Spleen (tissue), 13 donors: ENCODE measurements at regions of chr1 and their contacts with region 1.

Region 1: DNA sequence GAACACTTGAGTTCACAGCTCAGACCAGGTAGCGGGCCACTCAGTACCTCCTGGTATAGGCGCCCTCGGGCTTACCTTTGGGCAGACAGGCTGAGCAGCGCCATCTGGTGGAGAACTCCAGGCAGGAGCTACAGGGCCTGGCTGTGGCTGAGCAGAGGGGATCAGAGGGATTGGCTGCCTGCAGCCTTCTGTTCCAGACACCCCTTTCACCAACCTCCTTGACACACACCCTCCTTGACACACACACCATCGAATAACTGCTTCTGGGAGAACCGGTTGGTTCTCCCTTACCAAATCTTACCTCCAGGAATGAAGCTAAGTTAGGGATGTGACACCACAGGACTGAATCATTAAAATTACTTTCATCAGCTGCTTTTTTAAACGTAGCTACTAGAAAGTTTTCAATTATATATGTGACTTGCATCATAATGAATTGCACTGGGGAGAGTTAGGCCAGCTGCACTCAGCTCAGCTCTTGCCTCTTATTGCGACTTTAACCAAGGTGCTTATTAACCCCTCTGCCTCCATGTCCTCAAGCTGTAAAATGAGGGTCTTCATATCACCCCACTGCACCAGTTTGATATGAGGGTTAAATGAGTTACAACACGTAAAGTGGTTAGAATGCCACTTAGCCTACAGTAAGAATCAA is 6.6 kb downstream of the LIN28A start:
- DNase-seq: peak; percentile 94
- H3K4me3 ChIP-seq: no peak overlapping the region
- H3K27ac ChIP-seq: no peak overlapping the region
- H3K4me1 ChIP-seq: peaks cover 0 to 5% (median 0%) of the 10 kb centered on the region in 6 donors
- H3K27me3 ChIP-seq: peaks cover 0 to 54% (median 35%) of the 10 kb centered on the region in 7 donors
- CTCF ChIP-seq: peak; percentile 43 to 94 (median 86)
- POLR2A ChIP-seq: no peak

Region 2: GRCh38 chr1:25895365-25895993 is 521.8 kb before region 1 on chr1:
- intact Hi-C with region 1: no loop called
- DNase-seq: peak; percentile 97
- H3K4me3 ChIP-seq: peak overlapping the region in 1 of 8 donors; percentile 19
- H3K27ac ChIP-seq: peak overlapping the region in 2 of 8 donors; percentile 38 to 48
- H3K4me1 ChIP-seq: peaks cover 9 to 38% (median 13%) of the 10 kb centered on the region in 6 donors
- H3K27me3 ChIP-seq: no peaks in the 10 kb centered on the region
- CTCF ChIP-seq: peak; percentile 98 to 100 (median 99)
- POLR2A ChIP-seq: no peak

Region 3: DNA sequence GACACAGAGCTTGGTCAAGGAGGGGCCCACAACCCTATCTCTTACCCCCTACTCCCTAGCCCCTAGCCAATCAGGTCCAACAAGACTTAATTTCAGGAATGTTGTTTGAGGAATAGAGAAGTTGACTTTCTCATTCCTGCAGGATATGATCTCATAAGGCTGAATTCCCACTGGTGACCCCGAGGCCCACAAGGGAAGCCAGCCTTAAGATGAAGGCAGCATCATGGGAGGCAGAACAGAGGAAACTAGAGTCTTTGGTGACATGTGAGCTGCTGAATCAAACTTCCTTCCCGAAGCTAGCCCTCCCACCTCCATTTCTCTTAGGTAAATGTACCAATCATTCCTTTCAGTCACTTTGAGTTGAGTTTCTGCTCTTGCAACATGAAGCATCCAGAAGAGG is 314.7 kb before region 1 on chr1:
- intact Hi-C with region 1: loop called (anchors 10 kb)
- DNase-seq: no peak
- H3K4me3 ChIP-seq: no peak overlapping the region
- H3K27ac ChIP-seq: no peak overlapping the region
- H3K4me1 ChIP-seq: peaks cover 0 to 9% (median 2%) of the 10 kb centered on the region in 6 donors
- H3K27me3 ChIP-seq: no peaks in the 10 kb centered on the region
- CTCF ChIP-seq: no peak
- POLR2A ChIP-seq: no peak

Region 4: GRCh38 chr1:26472901-26473845 is 55.9 kb after region 1 on chr1:
- intact Hi-C with region 1: no loop called
- DNase-seq: peak; percentile 99
- H3K4me3 ChIP-seq: peak overlapping the region; percentile 75 to 99 (median 97)
- H3K27ac ChIP-seq: peak overlapping the region; percentile 99 to 100 (median 100)
- H3K4me1 ChIP-seq: peaks cover 27 to 83% (median 54%) of the 10 kb centered on the region in 6 donors
- H3K27me3 ChIP-seq: no peaks in the 10 kb centered on the region
- CTCF ChIP-seq: peak in 2 of 11 experiments; percentile 19 to 33
- POLR2A ChIP-seq: no peak